Posterior vena cava (tissue), 2 donors: ENCODE measurements at regions of chr12 and their contacts with region 1.

Region 1: DNA sequence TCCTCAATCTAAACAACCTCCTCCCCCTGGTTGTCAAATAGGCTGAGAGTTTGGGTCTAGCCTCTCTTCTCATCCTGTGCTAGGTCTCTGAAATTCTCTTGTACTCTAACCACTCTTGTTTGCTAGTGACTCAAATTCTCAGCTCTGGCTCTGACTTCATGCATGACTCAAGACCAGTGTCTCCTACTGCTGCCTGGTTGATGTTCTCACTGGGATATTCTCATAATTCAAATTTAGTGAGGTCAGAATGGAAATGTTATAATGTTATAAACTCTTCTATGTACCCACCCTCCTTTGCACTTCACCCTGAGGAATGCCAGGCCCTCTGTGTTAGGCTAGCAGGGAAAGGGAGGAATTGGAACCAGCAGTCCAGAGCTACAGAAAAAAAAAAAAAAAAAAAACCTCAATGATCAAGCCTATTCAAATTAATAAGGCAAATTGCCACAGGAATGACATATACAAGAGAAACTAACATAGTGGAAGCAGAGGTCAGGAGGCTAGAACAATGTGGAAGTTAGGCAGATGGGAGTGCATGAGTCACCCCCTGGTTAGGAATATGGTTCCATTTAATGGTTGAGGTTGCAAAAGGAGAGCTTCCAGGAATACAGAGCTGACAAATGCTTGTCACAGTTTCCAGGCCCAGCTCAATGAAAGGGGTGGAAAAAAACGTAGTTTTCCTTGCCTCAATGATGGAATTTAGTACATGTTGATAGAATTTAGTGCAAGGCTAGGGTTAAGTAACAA is 459.5 kb downstream of the RMST start:
- DNase-seq: no peak

Region 2: DNA sequence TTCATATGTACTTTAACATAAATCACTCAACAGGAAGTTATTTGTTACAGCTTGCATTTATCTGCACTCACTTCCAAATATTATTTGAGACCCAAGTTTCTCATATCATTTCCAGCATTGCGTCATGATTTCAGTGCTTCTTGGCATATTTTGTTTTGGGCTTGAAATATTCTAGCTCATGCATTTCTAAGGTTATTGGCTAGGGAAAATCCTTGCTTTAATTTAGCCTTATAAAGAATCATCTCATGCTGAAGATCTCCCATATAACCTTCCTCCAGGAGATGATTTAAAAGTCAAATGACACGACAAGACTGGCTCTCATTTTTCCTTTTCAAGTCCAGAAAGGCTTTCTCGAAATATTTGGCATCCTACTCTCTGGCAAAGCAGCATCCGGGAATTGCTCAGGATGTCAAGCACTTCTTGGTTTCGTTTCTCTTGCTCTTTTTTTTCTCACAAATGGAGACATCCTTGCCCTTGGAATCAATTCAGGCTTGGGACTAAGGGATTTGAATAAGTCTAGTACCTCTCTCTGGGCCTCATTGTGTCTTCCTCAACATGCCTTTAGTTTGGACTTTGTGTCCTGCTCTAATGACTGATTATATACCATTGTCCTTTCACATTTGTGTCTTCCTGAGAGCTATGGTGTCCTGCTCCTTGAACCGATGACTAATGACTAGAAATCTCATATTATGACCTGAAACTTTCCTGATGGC is 164.5 kb before region 1 on chr12:
- intact Hi-C with region 1: loop called in 1 of 2 experiments (anchors 10 kb)
- DNase-seq: no peak

Region 3: DNA sequence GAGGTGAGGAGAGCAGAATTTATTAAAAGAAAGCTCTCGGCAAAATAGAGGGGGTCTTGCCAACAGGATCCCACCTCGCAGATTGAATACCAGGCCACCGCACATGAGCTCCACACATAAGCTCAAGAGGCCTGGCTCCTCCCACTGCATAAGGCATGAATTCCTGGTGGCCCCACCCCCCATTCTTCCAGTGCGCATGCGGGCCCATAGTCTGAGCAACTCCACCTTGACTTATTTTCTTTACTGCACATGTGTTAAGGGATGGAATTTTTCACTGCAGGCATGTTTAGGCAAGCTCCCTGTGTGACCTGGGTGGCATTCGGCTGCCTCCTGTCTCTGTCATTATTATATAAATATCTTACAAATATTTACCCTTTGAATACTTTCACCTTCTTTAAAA is 47.1 kb before region 1 on chr12:
- intact Hi-C with region 1: no loop called
- DNase-seq: no peak

Region 4: DNA sequence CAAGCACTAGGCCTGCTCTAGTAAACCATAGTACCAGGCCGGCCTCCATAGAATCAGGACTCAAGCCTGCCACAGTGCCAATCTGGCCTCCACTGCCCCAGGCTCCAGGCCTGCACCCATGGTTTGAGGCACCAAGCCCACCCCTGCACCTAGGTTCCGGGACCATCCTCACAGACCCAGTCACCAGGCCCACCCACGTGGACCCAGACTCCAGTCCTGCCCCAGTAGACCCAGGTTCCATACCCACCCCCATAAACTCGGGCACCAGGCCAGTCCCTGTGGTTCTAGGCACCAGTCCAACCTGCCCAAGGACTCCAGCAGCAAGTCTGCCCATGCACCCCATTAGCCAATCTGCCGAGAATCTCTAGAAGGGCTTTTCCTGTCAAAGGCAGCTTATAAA is 91.4 kb after region 1 on chr12:
- intact Hi-C with region 1: no loop called
- DNase-seq: no peak